ENCODE measurements at regions of chr21 and their contacts with region 1.

Region 1: GRCh38 chr21:26834181-26834945 is 10.8 kb downstream of the ADAMTS1 start:
- DNase-seq: no peak
- H3K4me3 ChIP-seq: no peak overlapping the region
- H3K27ac ChIP-seq: peak overlapping the region in 1 of 2 experiments; percentile 52; a peak in 1 of 4 replicates
- H3K4me1 ChIP-seq: peaks cover 0 to 11% of the 10 kb centered on the region in 2 experiments; a peak in 3 of 4 replicates
- H3K27me3 ChIP-seq: no peaks in the 10 kb centered on the region
- CTCF ChIP-seq: peak; percentile 56
- EP300 ChIP-seq: no peak
- RAD21 ChIP-seq: no peak

Region 2: GRCh38 chr21:26776310-26777021 is 57.9 kb before region 1 on chr21:
- CTCF ChIA-PET with region 1: interaction called, 10 read pairs
- POLR2A ChIA-PET with region 1: no interaction called
- DNase-seq: no peak
- H3K4me3 ChIP-seq: no peak overlapping the region
- H3K27ac ChIP-seq: no peak overlapping the region
- H3K4me1 ChIP-seq: no peaks in the 10 kb centered on the region
- H3K27me3 ChIP-seq: no peaks in the 10 kb centered on the region
- CTCF ChIP-seq: no peak
- EP300 ChIP-seq: no peak
- RAD21 ChIP-seq: no peak

Measured in SK-N-SH (cell line).